ENCODE measurements at regions of chr11 and their contacts with region 1.

Region 1: GRCh38 chr11:96075532-96075959 is 151.6 kb upstream of the MTMR2 start:
- DNase-seq: no peak
- H3K4me3 Mint-ChIP-seq: peak overlapping the region; percentile 40
- H3K27ac Mint-ChIP-seq: peak overlapping the region; percentile 84
- H3K4me1 Mint-ChIP-seq: peaks cover 58% of the 10 kb centered on the region
- H3K27me3 Mint-ChIP-seq: no peaks in the 10 kb centered on the region

Region 2: DNA sequence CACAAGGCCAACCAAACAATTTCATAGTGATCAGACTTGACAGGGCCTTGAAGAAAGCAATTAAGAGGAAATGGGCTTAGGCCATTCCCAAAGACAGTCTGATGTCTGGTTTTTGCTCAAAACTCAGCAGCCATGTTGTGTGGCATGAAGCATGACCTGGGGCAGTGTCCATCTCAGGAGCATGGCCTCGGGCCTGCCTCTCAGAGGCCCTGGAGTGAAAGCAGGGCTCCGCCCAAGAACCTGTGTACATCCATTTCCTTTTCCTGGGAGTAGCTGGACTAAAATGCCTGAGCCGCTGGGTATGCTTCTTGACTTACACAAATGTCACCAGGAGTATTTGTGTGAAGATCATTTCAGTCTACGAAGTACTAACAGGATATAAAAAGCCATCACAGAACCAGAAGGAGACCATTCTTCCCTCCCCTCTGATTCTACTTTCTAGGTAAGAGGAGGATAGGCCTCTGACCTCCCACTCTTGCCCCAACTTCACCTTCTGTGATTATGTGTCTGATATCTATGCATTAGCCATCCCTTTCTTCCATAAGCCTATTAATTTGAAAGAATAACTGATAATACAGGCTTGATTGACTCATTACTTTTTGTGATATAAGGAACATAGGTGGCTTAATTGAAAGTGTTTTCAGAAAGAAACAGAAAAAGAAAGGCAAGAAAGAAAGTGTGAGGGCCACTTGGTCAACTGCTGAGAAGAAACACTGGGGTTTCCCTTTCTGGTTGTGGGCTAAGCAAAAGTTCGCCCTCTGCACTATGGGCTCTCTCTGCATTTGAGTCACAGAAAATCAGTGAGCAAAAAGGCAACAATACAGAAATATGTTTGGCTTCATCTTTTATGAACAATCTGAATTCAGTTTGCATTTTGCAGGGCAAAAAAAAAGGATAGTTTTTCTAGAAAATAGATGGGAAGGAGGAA is 36.9 kb after region 1 on chr11:
- intact Hi-C with region 1: loop called (anchors 5 kb)
- DNase-seq: no peak
- H3K4me3 Mint-ChIP-seq: peak overlapping the region; percentile 37
- H3K27ac Mint-ChIP-seq: peak overlapping the region; percentile 79
- H3K4me1 Mint-ChIP-seq: peaks cover 32% of the 10 kb centered on the region
- H3K27me3 Mint-ChIP-seq: no peaks in the 10 kb centered on the region